PC-3 (cell line): ENCODE measurements at regions of chr5 and their contacts with region 1.

Region 1: GRCh38 chr5:17679597-17680187 is 45.4 kb downstream of the TAF11L14 start:
- DNase-seq: peak; percentile 85
- ATAC-seq: no peak; the same call in 1 of the 2 replicates
- H3K4me3 ChIP-seq: no peak overlapping the region
- H3K27ac ChIP-seq: peak overlapping the region; percentile 8
- H3K4me1 ChIP-seq: peaks cover 15% of the 10 kb centered on the region
- H3K27me3 ChIP-seq: no peaks in the 10 kb centered on the region
- CTCF ChIP-seq: no peak

Region 2: DNA sequence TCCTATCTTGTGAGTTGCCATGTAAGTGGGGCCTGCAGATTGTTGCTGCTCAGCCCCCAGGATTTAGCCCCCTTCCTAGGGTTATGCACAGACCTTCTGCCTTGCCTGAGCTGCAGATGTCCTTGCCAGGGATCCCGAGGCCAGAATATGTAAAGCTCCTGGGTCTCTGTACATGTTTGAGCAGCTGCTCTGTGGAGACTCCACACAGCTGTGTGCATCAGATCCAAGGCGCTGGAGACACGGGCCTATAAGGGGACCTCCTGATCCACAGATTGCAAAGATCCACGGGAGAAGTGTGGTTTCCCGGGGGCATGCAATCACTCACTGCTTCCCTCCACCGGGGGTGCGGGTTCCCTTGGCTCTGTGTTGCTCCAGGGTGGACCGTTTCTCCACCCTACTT is 16.5 kb before region 1 on chr5:
- CTCF ChIA-PET with region 1: no interaction called
- POLR2A ChIA-PET with region 1: interaction called, 17 read pairs
- intact Hi-C with region 1: no loop called
- DNase-seq: no peak
- ATAC-seq: no peak
- H3K4me3 ChIP-seq: no peak overlapping the region
- H3K27ac ChIP-seq: no peak overlapping the region
- H3K4me1 ChIP-seq: no peaks in the 10 kb centered on the region
- H3K27me3 ChIP-seq: no peaks in the 10 kb centered on the region
- CTCF ChIP-seq: no peak

Region 3: GRCh38 chr5:17966636-17967402 is 287.1 kb after region 1 on chr5:
- CTCF ChIA-PET with region 1: no interaction called
- POLR2A ChIA-PET with region 1: no interaction called
- intact Hi-C with region 1: no loop called
- DNase-seq: peak; percentile 78
- ATAC-seq: peak; percentile 95
- H3K4me3 ChIP-seq: no peak overlapping the region
- H3K27ac ChIP-seq: no peak overlapping the region
- H3K4me1 ChIP-seq: peaks cover 8% of the 10 kb centered on the region; the same call in 1 of the 2 replicates
- H3K27me3 ChIP-seq: no peaks in the 10 kb centered on the region
- CTCF ChIP-seq: no peak